SK-N-SH (cell line): ENCODE measurements at regions of chr10 and their contacts with region 1.

Region 1: DNA sequence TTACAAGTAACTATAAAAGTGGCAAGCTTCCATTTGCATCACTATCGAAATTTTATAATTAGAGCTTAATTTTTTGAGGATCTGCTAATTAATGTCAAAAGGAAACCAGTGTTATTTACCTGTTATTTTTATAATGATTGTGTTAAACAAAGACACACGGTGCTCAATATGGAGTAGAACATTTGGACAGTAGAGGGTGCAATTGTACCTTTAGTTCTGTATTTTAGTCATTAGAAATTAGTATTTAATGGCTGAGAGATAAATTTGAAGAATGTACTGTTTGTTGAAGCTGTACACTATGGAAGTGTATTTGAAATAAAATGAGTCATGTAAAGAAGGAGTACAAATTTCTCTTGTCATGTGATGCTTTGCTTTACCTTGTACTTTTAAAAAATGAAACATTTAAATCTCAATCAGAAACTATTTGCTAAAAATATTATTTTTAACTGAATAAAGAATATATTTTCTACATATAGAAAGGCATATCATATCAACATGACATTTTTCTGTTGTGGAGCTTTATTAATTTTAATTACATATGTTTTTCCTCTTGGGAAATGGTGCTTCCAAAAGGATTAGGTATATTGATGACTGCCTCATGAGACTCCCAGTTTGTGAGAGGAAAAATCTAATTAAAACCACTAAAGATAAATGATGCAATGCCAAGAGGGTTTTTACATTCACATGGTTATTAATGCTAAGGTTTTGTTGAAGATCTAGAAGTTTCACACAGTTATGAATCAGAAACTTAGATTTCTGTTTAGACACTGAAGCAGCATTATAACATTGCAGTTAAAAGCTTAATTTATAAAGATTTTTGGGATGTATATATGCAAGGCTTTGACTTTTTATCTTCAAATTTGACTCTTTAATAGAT is 10.4 kb upstream of the PRKG1 start:
- DNase-seq: peak; percentile 22
- H3K4me3 ChIP-seq: no peak overlapping the region; a peak in 1 of 4 replicates
- H3K27ac ChIP-seq: no peak overlapping the region
- H3K4me1 ChIP-seq: no peaks in the 10 kb centered on the region; a peak in 1 of 4 replicates
- H3K27me3 ChIP-seq: no peaks in the 10 kb centered on the region
- CTCF ChIP-seq: peak; percentile 88
- EP300 ChIP-seq: no peak
- RAD21 ChIP-seq: peak; percentile 88

Region 2: GRCh38 chr10:51052163-51052562 is 11.7 kb before region 1 on chr10:
- CTCF ChIA-PET with region 1: interaction called, 29 read pairs
- POLR2A ChIA-PET with region 1: no interaction called
- DNase-seq: no peak
- H3K4me3 ChIP-seq: no peak overlapping the region
- H3K27ac ChIP-seq: peak overlapping the region in 1 of 2 experiments; percentile 50; a peak in 1 of 4 replicates
- H3K4me1 ChIP-seq: no peaks in the 10 kb centered on the region; a peak in 1 of 4 replicates
- H3K27me3 ChIP-seq: no peaks in the 10 kb centered on the region
- CTCF ChIP-seq: no peak
- EP300 ChIP-seq: no peak
- RAD21 ChIP-seq: no peak

Region 3: GRCh38 chr10:51083356-51083853 is 19.5 kb after region 1 on chr10:
- CTCF ChIA-PET with region 1: interaction called, 12 read pairs
- POLR2A ChIA-PET with region 1: no interaction called
- DNase-seq: no peak
- H3K4me3 ChIP-seq: no peak overlapping the region
- H3K27ac ChIP-seq: no peak overlapping the region; a peak in 1 of 4 replicates
- H3K4me1 ChIP-seq: no peaks in the 10 kb centered on the region; a peak in 1 of 4 replicates
- H3K27me3 ChIP-seq: no peaks in the 10 kb centered on the region
- CTCF ChIP-seq: no peak
- EP300 ChIP-seq: no peak
- RAD21 ChIP-seq: no peak

Region 4: DNA sequence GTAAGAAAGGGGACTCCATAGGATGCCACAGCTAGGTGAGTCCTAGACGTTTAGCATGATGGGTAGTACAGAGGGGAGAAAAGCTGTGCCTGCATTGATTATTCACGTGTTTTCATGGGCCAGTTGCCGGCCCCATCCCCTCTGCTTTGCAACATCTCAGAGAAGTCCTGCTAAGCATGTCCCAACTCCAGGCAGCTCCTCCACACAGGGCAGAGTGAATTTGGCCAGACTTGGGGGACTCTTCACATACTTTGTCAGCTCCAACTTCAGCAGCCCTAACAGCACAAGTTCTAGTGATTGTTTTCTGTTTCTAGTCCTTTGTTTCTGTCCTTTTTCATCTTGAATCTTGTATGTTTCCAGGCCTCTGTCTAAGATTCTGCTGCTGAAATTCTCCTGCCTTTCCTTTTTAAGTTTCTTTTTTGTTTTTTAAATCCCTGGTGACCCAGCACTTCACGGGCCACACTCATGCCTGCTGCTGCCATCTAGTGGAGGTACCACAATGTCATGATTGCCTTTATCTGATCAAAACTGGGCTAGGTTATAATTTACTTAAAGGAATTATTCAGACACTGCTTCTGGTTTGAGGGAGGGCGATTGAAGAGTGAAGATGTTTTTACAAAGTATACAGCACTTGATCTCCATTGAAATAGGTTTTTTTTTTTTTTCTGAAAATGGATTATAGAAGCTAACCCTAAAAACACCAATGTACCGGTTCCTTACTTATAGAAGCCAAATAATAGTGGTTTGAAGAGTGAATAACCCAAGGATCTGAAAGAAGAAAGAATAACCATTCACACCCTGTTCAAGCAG is 358.6 kb after region 1 on chr10:
- CTCF ChIA-PET with region 1: interaction called, 17 read pairs
- POLR2A ChIA-PET with region 1: no interaction called
- DNase-seq: peak; percentile 21
- H3K4me3 ChIP-seq: peak overlapping the region in 1 of 2 experiments; percentile 2; a peak in 1 of 4 replicates
- H3K27ac ChIP-seq: peak overlapping the region in 1 of 2 experiments; percentile 55; a peak in 1 of 4 replicates
- H3K4me1 ChIP-seq: peaks cover 0 to 3% of the 10 kb centered on the region in 2 experiments; a peak in 2 of 4 replicates
- H3K27me3 ChIP-seq: no peaks in the 10 kb centered on the region
- CTCF ChIP-seq: peak; percentile 95
- EP300 ChIP-seq: no peak
- RAD21 ChIP-seq: peak; percentile 74

Region 5: DNA sequence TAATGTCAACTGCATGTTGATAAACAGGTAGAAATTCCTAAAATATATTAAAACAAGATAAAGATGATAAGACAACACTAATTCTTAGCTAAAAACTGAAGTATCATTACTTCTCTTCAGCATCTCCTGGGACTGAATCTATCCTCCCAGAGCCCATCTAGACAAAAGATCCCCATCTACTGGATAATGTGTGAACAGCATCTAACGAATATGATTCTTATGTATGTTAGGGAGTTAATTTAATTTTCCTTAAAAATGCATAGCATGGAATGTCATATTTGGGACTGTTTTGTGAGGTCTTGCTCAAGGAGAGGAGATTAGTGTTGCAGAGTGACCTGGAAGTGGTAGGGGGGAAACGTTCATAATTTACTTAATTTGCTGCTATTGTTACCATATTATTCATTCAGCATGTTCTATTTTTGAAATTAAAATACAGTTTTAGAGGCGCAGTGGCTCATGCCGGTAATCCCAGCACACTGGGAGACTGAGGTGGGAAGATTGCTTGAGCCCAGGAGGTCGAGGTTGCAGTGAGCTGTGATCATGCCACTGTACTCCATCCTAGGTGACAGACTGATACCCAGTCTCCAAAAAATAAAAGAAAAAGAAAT is 940.5 kb after region 1 on chr10:
- CTCF ChIA-PET with region 1: interaction called, 10 read pairs
- POLR2A ChIA-PET with region 1: no interaction called
- DNase-seq: peak; percentile 60
- H3K4me3 ChIP-seq: no peak overlapping the region
- H3K27ac ChIP-seq: no peak overlapping the region
- H3K4me1 ChIP-seq: no peaks in the 10 kb centered on the region; a peak in 1 of 4 replicates
- H3K27me3 ChIP-seq: no peaks in the 10 kb centered on the region
- CTCF ChIP-seq: peak; percentile 81
- EP300 ChIP-seq: no peak
- RAD21 ChIP-seq: peak; percentile 84